Mammary epithelial cell (primary cell): ENCODE measurements at regions of chr14 and their contacts with region 1.

Region 1: GRCh38 chr14:39015360-39015961 is 87.6 kb downstream of the SEC23A start:
- DNase-seq: peak; percentile 11
- H3K4me3 ChIP-seq: no peak overlapping the region
- H3K27ac ChIP-seq: no peak overlapping the region
- H3K4me1 ChIP-seq: no peaks in the 10 kb centered on the region
- H3K27me3 ChIP-seq: no peaks in the 10 kb centered on the region
- CTCF ChIP-seq: peak; percentile 77 to 93

Region 2: DNA sequence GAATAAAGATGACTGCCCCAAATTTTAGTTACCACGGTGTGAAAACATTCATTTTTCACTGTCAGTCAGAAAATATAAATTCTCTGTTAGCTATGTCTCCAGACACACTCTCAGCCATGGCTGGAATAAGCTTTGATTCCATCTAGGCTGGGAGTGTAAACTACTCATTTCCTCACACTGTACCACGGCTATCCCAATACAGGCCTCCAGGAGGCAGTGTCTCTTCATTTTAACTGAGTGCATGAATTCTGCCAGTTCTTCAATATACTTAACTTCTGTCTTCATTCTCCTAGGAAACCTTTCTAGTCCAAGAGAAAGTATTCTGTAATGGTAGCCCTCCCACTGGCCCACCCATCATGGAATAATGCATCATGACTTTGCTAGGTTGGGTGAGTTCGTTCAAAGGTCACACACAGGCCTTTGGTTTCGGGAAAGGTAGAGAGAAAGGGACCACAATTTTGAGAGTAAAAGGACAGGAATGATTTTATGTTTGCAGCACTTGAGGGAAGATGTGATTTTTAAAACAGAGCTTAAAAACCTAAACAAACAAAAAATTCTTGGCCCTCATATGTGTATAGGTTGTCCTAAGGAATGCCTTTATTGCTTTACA is 293.5 kb before region 1 on chr14:
- CTCF ChIA-PET with region 1: interaction called, 4 read pairs
- dilution Hi-C with region 1: loop called (anchors 25 kb)
- in situ Hi-C with region 1: loop called in 1 of 2 experiments (anchors 25 kb)
- intact Hi-C with region 1: loop called (anchors 1 kb)
- DNase-seq: peak; percentile 32
- H3K4me3 ChIP-seq: no peak overlapping the region
- H3K27ac ChIP-seq: no peak overlapping the region
- H3K4me1 ChIP-seq: no peaks in the 10 kb centered on the region
- H3K27me3 ChIP-seq: no peaks in the 10 kb centered on the region
- CTCF ChIP-seq: peak; percentile 78 to 86

Region 3: DNA sequence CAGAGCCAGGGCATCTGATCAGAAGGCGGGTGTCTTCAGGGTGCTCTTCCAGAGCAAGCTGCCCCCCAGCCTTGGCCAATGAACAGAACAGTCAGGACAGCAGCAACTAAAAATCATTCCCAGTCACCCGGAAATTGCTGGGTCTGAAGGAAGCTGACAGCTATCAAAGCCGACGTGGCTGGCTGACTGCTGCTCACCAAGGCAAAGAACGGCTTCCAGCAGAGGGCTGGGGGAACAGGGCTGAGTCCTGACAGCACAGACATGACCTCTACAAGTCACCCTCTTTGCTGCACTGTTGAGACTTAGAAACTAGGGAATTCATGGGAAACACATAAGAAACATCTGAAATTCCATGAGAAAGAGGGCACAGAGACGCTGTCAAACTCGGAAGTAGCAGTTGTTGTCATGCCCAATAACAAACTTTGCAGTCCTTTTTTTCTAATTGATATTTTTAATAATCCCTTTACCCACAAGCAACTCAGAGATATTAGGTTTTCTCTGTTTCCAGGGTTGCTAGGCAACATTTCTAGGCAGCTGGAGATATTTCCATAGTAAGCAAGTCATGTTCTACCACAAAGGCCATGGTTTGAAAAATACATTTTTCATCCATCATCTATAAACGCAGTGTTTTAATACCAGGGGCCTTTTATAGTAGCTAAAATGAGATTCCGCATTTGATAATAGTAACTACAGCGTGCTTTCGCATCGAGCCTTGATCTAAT is 277.6 kb before region 1 on chr14:
- CTCF ChIA-PET with region 1: no interaction called
- dilution Hi-C with region 1: no loop called
- in situ Hi-C with region 1: loop called in 1 of 2 experiments (anchors 25 kb)
- intact Hi-C with region 1: no loop called
- DNase-seq: no peak
- H3K4me3 ChIP-seq: no peak overlapping the region
- H3K27ac ChIP-seq: no peak overlapping the region
- H3K4me1 ChIP-seq: no peaks in the 10 kb centered on the region
- H3K27me3 ChIP-seq: no peaks in the 10 kb centered on the region
- CTCF ChIP-seq: no peak

Region 4: DNA sequence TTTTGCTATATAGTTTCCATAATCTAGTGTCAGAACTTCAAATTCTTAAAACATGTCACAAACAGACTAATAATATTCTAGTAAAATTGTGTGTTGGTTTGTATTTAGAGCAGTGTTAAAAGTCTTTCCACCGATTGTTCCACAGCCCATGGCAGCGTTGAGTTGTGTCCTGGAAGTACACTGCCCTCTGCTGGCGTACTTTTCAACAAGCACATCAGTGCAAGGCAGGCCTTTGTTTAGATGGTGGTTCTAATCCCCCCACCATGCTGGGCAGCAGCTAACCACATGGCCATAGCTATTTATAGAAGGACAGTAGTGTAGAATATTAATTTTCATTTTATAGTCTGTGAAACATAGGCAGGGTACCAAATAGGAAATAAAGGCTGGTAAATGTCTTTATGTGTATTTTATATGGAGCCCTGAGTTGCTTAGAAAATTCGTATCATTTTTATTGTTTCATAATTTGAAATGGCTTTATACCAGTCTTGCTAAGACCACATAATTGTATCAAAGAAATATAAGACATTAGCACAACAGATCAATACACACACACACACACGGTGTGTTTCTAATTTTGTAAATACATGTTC is 147.8 kb before region 1 on chr14:
- CTCF ChIA-PET with region 1: no interaction called
- dilution Hi-C with region 1: no loop called
- in situ Hi-C with region 1: no loop called
- intact Hi-C with region 1: loop called (anchors 2 kb)
- DNase-seq: peak; percentile 42
- H3K4me3 ChIP-seq: no peak overlapping the region
- H3K27ac ChIP-seq: no peak overlapping the region
- H3K4me1 ChIP-seq: no peaks in the 10 kb centered on the region
- H3K27me3 ChIP-seq: no peaks in the 10 kb centered on the region
- CTCF ChIP-seq: peak; percentile 86 to 88

Region 5: GRCh38 chr14:38958594-38958993 is 56.9 kb before region 1 on chr14:
- CTCF ChIA-PET with region 1: no interaction called
- dilution Hi-C with region 1: no loop called
- in situ Hi-C with region 1: no loop called
- intact Hi-C with region 1: no loop called
- DNase-seq: no peak
- H3K4me3 ChIP-seq: no peak overlapping the region
- H3K27ac ChIP-seq: no peak overlapping the region
- H3K4me1 ChIP-seq: no peaks in the 10 kb centered on the region
- H3K27me3 ChIP-seq: no peaks in the 10 kb centered on the region
- CTCF ChIP-seq: no peak